Spleen (tissue), 13 donors: ENCODE measurements at regions of chr12 and their contacts with region 1.

Region 1: GRCh38 chr12:54191550-54192022 is 2.8 kb upstream of the SMUG1 start:
- DNase-seq: peak; percentile 92
- H3K4me3 ChIP-seq: no peak overlapping the region
- H3K27ac ChIP-seq: no peak overlapping the region
- H3K4me1 ChIP-seq: peaks cover 12 to 55% (median 33%) of the 10 kb centered on the region in 6 donors
- H3K27me3 ChIP-seq: peaks cover 0 to 64% (median 19%) of the 10 kb centered on the region in 7 donors
- CTCF ChIP-seq: peak; percentile 69 to 95 (median 86)
- POLR2A ChIP-seq: no peak

Region 2: GRCh38 chr12:54005853-54006686 is 185.5 kb before region 1 on chr12:
- intact Hi-C with region 1: loop called (anchors 5 kb)
- DNase-seq: peak; percentile 96
- H3K4me3 ChIP-seq: peak overlapping the region; percentile 2 to 64 (median 30)
- H3K27ac ChIP-seq: no peak overlapping the region
- H3K4me1 ChIP-seq: peaks cover 0 to 47% (median 26%) of the 10 kb centered on the region in 6 donors
- H3K27me3 ChIP-seq: peaks cover 11 to 100% (median 95%) of the 10 kb centered on the region in 7 donors
- CTCF ChIP-seq: peak; percentile 83 to 98 (median 94)
- POLR2A ChIP-seq: no peak

Region 3: DNA sequence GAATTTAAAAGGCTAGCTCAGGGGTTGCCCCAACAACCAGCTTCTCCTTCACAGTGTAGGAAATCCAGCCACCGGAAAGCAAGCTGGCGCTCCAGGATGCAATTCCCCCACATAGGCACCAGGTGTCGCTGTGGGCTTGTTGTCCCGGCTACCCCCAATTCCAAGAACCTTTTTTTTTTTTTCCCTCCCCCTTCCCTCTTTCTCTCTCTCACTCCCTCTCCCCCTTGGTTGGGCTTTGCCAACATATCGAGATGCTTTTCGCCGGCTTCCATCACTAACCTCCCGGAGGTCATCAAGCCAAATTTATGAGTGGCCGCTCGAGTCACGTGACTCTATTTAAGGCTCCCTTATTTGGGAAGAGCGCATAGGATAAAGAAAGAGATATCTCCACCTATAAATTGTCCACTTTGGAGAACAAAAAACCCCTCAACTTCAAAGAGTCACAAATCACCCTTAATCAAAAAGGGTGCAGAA is 158.9 kb before region 1 on chr12 and contains the start of gene HOXC5:
- intact Hi-C with region 1: loop called (anchors 5 kb)
- DNase-seq: peak; percentile 84
- H3K4me3 ChIP-seq: peak within 1 kb of the TSS in 7 of 8 donors; percentile 10 to 59 (median 26)
- H3K27ac ChIP-seq: no peak within 1 kb of the TSS
- H3K4me1 ChIP-seq: peaks cover 5 to 62% (median 33%) of the 10 kb centered on the region in 6 donors
- H3K27me3 ChIP-seq: peaks cover 17 to 100% (median 96%) of the 10 kb centered on the region in 7 donors
- CTCF ChIP-seq: peak; percentile 86 to 95 (median 94)
- POLR2A ChIP-seq: no peak
- total RNA-seq, gene HOXC5: not detected

Region 4: DNA sequence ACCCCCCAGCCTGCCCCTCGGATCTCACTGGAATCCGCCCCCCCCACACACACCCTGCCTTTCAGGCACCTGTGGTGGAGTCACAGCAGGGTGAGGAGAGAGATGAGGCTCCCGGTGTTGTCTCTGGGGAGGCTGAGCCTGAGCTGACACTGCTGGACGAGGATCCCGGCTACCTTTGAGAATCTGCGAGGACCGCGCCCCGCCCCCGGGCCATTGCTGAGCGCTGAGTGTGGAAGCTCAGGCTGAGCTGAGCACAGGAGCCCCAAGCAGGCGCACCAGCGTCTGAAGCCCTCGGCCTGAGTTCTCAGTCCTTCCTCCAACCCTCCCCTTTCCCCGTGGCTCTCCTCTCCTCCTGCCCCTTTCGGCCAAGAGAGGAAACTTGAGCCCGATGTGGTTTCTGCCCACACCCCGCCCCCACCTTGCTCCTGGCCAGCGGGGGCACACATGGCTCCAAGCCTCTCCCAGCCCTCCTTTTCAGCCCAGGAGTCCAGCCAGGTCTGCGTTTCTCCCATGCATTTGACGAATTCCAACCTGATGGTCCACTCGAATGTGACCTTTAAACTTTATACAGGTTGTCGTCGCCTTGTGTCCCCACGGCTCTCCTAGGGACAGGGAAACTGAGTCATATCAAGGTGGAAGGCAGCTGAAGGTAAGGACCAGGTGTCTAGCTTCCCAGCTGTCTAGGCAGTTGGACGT is 109.3 kb after region 1 on chr12 and contains the start of gene NFE2:
- intact Hi-C with region 1: no loop called
- DNase-seq: peak; percentile 92
- H3K4me3 ChIP-seq: peak within 1 kb of the TSS in 7 of 8 donors; percentile 16 to 63 (median 23)
- H3K27ac ChIP-seq: peak within 1 kb of the TSS in 7 of 8 donors; percentile 36 to 94 (median 81)
- H3K4me1 ChIP-seq: peaks cover 7 to 64% (median 25%) of the 10 kb centered on the region in 6 donors
- H3K27me3 ChIP-seq: peaks cover 0 to 74% (median 34%) of the 10 kb centered on the region in 7 donors
- CTCF ChIP-seq: peak in 2 of 11 experiments; percentile 26 to 38
- POLR2A ChIP-seq: no peak
- total RNA-seq, gene NFE2: 14.1 to 93.7 (median 45.0) TPM